ENCODE measurements at regions of chr7 and their contacts with region 1.

Region 1: GRCh38 chr7:140494867-140495266 is 15.6 kb upstream of the MKRN1 start:
- DNase-seq: no peak
- ATAC-seq: no peak
- H3K4me3 ChIP-seq: no peak overlapping the region
- H3K27ac ChIP-seq: no peak overlapping the region
- H3K4me1 ChIP-seq: no peaks in the 10 kb centered on the region
- H3K27me3 ChIP-seq: no peaks in the 10 kb centered on the region
- CTCF ChIP-seq: no peak

Region 2: DNA sequence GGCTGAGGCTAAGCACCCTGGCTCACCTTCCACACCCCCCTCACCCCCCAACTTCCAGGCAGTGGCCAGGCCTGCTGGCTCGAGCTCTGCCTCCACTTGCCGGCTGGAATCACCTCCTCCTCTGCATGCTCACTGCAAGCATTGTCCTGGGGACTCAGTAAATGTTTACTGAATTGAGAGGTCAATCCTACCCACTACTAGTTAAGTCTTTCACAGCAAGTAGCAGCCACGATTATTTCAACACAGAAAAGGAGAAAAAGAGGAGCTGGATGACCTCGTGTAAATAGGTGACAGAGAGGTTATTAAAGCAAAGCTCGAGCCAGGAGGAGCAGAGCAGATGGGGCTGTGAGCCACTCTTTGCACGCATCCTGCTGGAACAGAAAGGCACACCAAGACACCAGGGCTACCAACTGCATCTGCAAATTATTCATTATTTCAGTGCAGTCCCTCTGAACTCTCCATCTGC is 749.2 kb before region 1 on chr7:
- CTCF ChIA-PET with region 1: no interaction called
- POLR2A ChIA-PET with region 1: no interaction called
- intact Hi-C with region 1: no loop called
- DNase-seq: no peak
- ATAC-seq: no peak
- H3K4me3 ChIP-seq: no peak overlapping the region
- H3K27ac ChIP-seq: no peak overlapping the region
- H3K4me1 ChIP-seq: peaks cover 26% of the 10 kb centered on the region
- H3K27me3 ChIP-seq: no peaks in the 10 kb centered on the region
- CTCF ChIP-seq: no peak

Region 3: DNA sequence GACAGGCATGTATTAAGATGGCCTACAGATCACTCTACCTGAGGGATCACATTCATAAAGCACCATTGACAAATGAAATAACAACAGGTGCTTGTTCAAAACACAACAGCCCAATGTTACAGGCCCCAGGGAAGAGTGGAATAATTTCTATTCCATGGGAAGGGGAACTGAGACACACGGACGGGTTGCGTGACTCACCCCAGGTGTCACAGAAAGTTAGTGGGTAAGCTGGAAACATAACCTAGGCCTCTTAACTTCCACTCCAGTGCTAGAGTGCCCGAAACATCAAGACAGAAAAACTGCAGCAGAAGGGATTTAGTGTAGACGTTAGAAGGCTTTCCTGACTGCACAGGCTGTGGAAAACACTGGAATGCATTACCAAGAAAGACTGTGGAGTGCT is 144.8 kb before region 1 on chr7:
- CTCF ChIA-PET with region 1: no interaction called
- POLR2A ChIA-PET with region 1: no interaction called
- intact Hi-C with region 1: loop called (anchors 5 kb)
- DNase-seq: no peak
- ATAC-seq: no peak
- H3K4me3 ChIP-seq: no peak overlapping the region
- H3K27ac ChIP-seq: no peak overlapping the region
- H3K4me1 ChIP-seq: no peaks in the 10 kb centered on the region
- H3K27me3 ChIP-seq: no peaks in the 10 kb centered on the region
- CTCF ChIP-seq: no peak

Region 4: GRCh38 chr7:140479062-140479738 is 15.7 kb before region 1 on chr7 and contains the start of gene MKRN1:
- CTCF ChIA-PET with region 1: no interaction called
- POLR2A ChIA-PET with region 1: interaction called, 3 read pairs
- intact Hi-C with region 1: loop called (anchors 1 kb)
- DNase-seq: peak; percentile 95
- ATAC-seq: peak; percentile 93
- H3K4me3 ChIP-seq: peak within 1 kb of the TSS; percentile 99
- H3K27ac ChIP-seq: peak within 1 kb of the TSS; percentile 58
- H3K4me1 ChIP-seq: no peaks in the 10 kb centered on the region; the same call in 1 of the 2 replicates
- H3K27me3 ChIP-seq: no peaks in the 10 kb centered on the region
- CTCF ChIP-seq: no peak
- total RNA-seq, gene MKRN1: 71.9 and 78.5 TPM in 2 replicates

Region 5: GRCh38 chr7:140533394-140533872 is 38.6 kb after region 1 on chr7:
- CTCF ChIA-PET with region 1: no interaction called
- POLR2A ChIA-PET with region 1: no interaction called
- intact Hi-C with region 1: no loop called
- DNase-seq: no peak
- ATAC-seq: no peak
- H3K4me3 ChIP-seq: no peak overlapping the region
- H3K27ac ChIP-seq: no peak overlapping the region
- H3K4me1 ChIP-seq: no peaks in the 10 kb centered on the region
- H3K27me3 ChIP-seq: no peaks in the 10 kb centered on the region
- CTCF ChIP-seq: no peak

Measured in PC-3 (cell line).